Naive thymus-derived CD4-positive, alpha-beta T cell (primary cell): ENCODE measurements at regions of chr17 and their contacts with region 1.

Region 1: DNA sequence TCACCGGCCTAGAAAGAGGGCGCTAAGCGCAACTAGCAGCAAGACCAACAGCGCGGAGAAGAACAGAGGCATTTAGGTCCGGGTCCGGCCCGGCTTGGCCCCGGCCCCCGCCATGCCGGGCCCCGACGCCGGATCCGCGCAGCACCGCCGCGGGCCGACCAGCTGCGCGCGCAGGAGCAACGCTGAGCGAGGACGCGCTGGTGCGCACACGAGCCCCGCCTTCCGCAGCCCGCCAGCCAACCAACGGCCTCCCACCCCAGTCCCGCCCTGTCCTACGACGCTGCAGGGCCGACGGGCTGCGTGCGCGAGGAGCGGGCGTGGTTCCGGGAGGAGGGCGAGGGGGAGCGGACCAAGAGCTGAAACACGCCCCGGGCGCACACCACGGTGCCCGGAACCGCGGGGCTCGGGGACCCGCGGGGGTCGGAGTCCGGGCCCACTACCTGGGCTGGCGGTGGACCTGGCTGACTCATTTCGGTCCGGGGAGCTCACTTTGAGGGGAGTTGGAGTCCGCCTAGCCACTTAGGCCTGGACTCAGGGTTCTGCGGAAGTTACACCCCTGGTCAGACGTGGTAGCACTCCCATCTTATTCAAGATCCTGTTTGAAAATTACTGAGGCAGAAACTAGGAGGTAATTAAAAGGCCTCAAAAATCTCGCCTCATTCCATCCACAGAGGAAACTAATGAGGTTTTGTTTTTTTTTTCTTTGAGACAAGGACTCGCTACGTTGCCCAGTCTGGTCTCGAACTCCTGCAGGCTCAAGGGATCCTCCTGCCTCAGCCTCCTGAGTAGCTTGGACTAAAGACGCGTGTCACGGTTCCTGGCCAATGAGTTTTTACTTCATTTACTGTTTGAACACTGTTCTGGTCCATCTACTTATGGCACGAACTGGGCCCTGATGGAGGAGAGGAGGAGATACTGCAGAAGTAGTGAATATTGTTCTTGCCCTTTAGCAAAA is at the start of gene BLTP2:
- DNase-seq: peak; percentile 86 to 95 (median 93)
- ATAC-seq: peak; percentile 99
- H3K4me3 ChIP-seq: peak within 1 kb of the TSS; percentile 87
- H3K4me3 Mint-ChIP-seq: peak within 1 kb of the TSS; percentile 89 to 99 (median 94)
- H3K27ac ChIP-seq: peak within 1 kb of the TSS; percentile 95
- H3K27ac Mint-ChIP-seq: peak within 1 kb of the TSS; percentile 90 to 99 (median 97)
- H3K4me1 ChIP-seq: peaks cover 26 to 29% of the 10 kb centered on the region in 2 donors
- H3K4me1 Mint-ChIP-seq: peaks cover 29 to 57% (median 39%) of the 10 kb centered on the region in 7 donors
- H3K27me3 ChIP-seq: no peaks in the 10 kb centered on the region
- H3K27me3 Mint-ChIP-seq: no peaks in the 10 kb centered on the region
- total RNA-seq, gene BLTP2: 143 to 163 (median 153) TPM

Region 2: GRCh38 chr17:27892866-27893769 is 752.1 kb before region 1 on chr17 and contains the start of gene LYRM9:
- CTCF ChIA-PET with region 1: no interaction called
- POLR2A ChIA-PET with region 1: no interaction called
- intact Hi-C with region 1: loop called in 1 of 2 experiments (anchors 10 kb)
- DNase-seq: peak; percentile 87 to 99 (median 93)
- ATAC-seq: peak; percentile 100
- H3K4me3 ChIP-seq: peak within 1 kb of the TSS; percentile 80
- H3K4me3 Mint-ChIP-seq: peak within 1 kb of the TSS; percentile 76 to 95 (median 88)
- H3K27ac ChIP-seq: peak within 1 kb of the TSS; percentile 73
- H3K27ac Mint-ChIP-seq: peak within 1 kb of the TSS; percentile 69 to 89 (median 84)
- H3K4me1 ChIP-seq: peaks cover 0 to 13% of the 10 kb centered on the region in 2 donors
- H3K4me1 Mint-ChIP-seq: peaks cover 15 to 29% (median 26%) of the 10 kb centered on the region in 7 donors
- H3K27me3 ChIP-seq: no peaks in the 10 kb centered on the region
- H3K27me3 Mint-ChIP-seq: peaks cover 15 to 45% (median 19%) of the 10 kb centered on the region in 5 donors
- total RNA-seq, gene LYRM9: 4.2 to 24.5 (median 14.0) TPM

Region 3: DNA sequence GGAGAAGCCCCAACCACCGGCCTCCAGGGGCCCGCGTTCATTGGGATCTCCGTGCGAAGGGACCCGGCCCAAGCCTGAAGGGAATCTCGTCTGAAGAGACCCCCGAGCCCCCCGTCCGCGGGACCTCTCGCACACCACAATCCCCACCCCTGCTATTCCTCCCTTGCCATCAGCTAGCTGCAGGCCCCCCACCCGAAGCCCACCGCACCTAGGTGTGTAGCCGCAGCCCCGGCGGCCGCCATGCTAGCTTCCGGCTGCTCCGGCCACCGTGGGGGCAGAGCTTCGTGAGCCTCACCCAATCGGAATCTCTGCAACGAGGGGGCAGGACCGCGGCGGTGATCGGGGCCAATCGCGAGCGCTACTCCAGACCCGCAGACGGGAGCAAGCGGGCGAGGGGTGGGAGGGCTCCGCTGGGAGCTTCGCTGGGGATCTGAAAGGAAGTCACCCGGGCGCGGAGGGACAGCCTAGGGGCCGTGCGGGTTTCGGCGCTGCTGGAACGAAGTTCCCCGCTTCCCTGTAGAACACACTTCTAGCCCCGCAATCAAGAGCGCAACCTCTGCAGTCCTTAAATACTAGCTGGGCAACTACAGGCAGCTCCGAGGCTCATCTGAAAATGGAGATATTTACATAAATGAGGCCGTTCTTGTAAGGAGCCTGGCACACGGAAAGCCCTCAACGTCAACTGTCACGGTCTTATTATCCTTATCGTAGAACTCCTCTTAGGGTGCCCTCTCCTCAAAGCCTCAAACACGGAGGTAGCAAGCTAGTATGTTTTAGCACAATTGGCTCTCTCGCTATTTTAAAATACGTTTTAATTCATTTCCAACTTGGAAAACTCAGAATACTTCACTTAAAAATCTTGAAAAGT is 73.8 kb before region 1 on chr17 and contains the start of gene PIGS:
- CTCF ChIA-PET with region 1: no interaction called
- POLR2A ChIA-PET with region 1: interaction called, 14 read pairs
- intact Hi-C with region 1: loop called (anchors 1 to 5 kb)
- DNase-seq: peak; percentile 72 to 93 (median 84)
- ATAC-seq: peak; percentile 99
- H3K4me3 ChIP-seq: peak within 1 kb of the TSS; percentile 78
- H3K4me3 Mint-ChIP-seq: peak within 1 kb of the TSS; percentile 93 to 99 (median 96)
- H3K27ac ChIP-seq: peak within 1 kb of the TSS; percentile 90
- H3K27ac Mint-ChIP-seq: peak within 1 kb of the TSS; percentile 84 to 97 (median 93)
- H3K4me1 ChIP-seq: peaks cover 28 to 31% of the 10 kb centered on the region in 2 donors
- H3K4me1 Mint-ChIP-seq: peaks cover 49 to 76% (median 68%) of the 10 kb centered on the region in 7 donors
- H3K27me3 ChIP-seq: no peaks in the 10 kb centered on the region
- H3K27me3 Mint-ChIP-seq: no peaks in the 10 kb centered on the region
- total RNA-seq, gene PIGS: 58.5 to 71.2 (median 62.4) TPM

Region 4: DNA sequence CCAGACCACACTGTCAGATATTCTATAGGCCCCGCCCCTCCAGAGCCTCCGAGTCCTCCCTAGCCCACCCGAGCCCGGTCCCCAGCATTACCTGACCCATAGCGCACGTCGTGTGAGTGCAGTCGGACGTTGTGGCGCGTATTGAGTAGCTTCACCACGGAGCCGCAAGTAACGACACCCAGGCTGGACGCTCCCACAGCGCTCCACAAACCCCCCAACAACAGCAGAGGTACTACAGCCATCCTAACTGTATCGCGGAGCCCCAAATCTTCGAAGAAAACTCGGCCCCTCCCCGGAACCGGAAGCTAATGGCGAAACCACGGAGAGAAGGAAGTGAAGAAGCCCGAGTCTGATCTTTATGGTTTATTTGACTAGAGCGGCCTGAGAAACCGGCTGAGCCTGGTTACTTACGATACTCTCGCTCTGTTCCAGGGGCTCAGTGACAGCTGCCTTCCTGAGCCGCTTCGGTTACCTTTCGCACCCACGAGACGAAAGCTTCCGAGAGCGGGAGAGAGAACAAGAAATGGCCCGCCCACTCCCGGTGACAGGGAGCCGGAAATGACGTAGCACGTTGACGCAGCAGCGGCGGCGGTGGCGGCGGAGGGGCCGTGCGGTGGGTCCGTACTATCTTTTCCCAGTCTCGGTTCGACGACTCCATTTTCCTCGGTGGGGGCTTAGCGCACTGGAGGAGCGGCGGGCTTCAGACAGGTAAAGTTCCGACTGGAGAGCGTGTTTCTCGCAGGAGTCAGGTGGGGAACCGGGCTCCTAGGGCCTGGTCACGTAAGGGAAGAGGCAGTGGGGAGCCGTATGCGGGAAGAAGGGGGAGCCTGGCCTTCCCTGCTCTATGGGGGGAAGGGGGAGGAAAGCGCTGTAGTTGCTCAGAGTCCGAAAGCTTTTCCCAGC is 16.6 kb after region 1 on chr17 and contains the starts of genes SDF2 and SUPT6H:
- CTCF ChIA-PET with region 1: interaction called, 15 read pairs
- POLR2A ChIA-PET with region 1: interaction called, 81 read pairs
- intact Hi-C with region 1: loop called (anchors 1 kb)
- DNase-seq: peak; percentile 91 to 97 (median 95)
- ATAC-seq: peak; percentile 91
- H3K4me3 ChIP-seq: peak within 1 kb of the TSS; percentile 72
- H3K4me3 Mint-ChIP-seq: peak within 1 kb of the TSS; percentile 86 to 100 (median 99)
- H3K27ac ChIP-seq: peak within 1 kb of the TSS; percentile 90
- H3K27ac Mint-ChIP-seq: peak within 1 kb of the TSS; percentile 98 to 100 (median 100)
- H3K4me1 ChIP-seq: peaks cover 24 to 35% of the 10 kb centered on the region in 2 donors
- H3K4me1 Mint-ChIP-seq: peaks cover 45 to 73% (median 67%) of the 10 kb centered on the region in 7 donors
- H3K27me3 ChIP-seq: no peaks in the 10 kb centered on the region
- H3K27me3 Mint-ChIP-seq: no peaks in the 10 kb centered on the region
- total RNA-seq, gene SDF2: 28.6 to 49.5 (median 43.8) TPM
- total RNA-seq, gene SUPT6H: 91.2 to 132 (median 98.5) TPM

Region 5: DNA sequence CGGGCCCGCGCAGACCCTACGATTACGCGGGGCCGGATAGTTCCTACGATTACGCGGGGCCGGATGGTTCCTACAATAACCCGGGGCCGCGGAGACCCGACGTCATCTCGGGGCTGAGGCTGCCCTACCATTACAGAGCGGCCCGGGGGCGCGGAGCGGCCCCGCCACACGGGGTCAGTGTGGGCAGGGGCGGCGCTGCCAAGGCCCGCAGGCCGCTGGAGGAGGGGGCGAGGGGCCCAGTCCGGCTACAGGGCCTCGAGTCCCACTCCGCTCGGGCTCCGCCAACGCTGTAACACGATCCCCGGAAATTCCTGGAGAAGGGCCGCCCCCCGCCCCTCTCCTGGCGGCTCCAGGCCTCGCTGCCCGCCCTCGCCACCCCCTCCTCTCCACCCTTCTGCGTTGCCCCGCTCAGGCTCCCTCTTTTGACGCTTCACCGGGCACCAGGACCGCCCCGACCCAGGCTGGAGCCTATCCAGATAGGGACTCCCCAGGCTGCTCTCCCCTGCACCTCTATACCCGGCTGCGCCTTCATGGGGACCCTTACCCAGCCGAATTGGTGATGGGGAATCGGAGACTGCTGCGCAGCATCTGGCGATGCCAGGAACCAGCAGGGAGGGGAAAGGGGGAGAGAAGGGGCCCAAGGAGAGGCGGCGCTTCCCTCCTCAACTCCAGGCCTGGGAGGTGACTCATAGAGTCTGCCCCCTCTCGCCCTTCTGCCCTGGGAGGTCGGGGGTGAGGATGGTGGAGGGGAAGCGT is 72.5 kb after region 1 on chr17 and contains the start of gene RAB34:
- CTCF ChIA-PET with region 1: interaction called, 4 read pairs
- POLR2A ChIA-PET with region 1: interaction called, 33 read pairs
- intact Hi-C with region 1: loop called in 1 of 2 experiments (anchors 1 kb)
- DNase-seq: peak in 2 of 9 donors; percentile 18 to 21
- ATAC-seq: no peak
- H3K4me3 ChIP-seq: no peak within 1 kb of the TSS
- H3K4me3 Mint-ChIP-seq: peak within 1 kb of the TSS; percentile 58 to 99 (median 76)
- H3K27ac ChIP-seq: peak within 1 kb of the TSS; percentile 52
- H3K27ac Mint-ChIP-seq: peak within 1 kb of the TSS; percentile 59 to 97 (median 85)
- H3K4me1 ChIP-seq: peaks cover 26 to 30% of the 10 kb centered on the region in 2 donors
- H3K4me1 Mint-ChIP-seq: peaks cover 17 to 57% (median 35%) of the 10 kb centered on the region in 7 donors
- H3K27me3 ChIP-seq: no peaks in the 10 kb centered on the region
- H3K27me3 Mint-ChIP-seq: peaks cover 0 to 24% (median 6%) of the 10 kb centered on the region in 5 donors
- total RNA-seq, gene RAB34: 11.0 to 50.2 (median 16.4) TPM

Region 6: GRCh38 chr17:28792877-28793661 is 147.8 kb after region 1 on chr17:
- CTCF ChIA-PET with region 1: no interaction called
- POLR2A ChIA-PET with region 1: no interaction called
- intact Hi-C with region 1: no loop called
- DNase-seq: no peak
- ATAC-seq: no peak
- H3K4me3 ChIP-seq: no peak overlapping the region
- H3K4me3 Mint-ChIP-seq: no peak overlapping the region
- H3K27ac ChIP-seq: no peak overlapping the region
- H3K27ac Mint-ChIP-seq: peak overlapping the region in 3 of 9 donors; percentile 25 to 61 (median 55)
- H3K4me1 ChIP-seq: peaks cover 0 to 6% of the 10 kb centered on the region in 2 donors
- H3K4me1 Mint-ChIP-seq: peaks cover 19 to 44% (median 41%) of the 10 kb centered on the region in 7 donors
- H3K27me3 ChIP-seq: no peaks in the 10 kb centered on the region
- H3K27me3 Mint-ChIP-seq: no peaks in the 10 kb centered on the region

Region 7: DNA sequence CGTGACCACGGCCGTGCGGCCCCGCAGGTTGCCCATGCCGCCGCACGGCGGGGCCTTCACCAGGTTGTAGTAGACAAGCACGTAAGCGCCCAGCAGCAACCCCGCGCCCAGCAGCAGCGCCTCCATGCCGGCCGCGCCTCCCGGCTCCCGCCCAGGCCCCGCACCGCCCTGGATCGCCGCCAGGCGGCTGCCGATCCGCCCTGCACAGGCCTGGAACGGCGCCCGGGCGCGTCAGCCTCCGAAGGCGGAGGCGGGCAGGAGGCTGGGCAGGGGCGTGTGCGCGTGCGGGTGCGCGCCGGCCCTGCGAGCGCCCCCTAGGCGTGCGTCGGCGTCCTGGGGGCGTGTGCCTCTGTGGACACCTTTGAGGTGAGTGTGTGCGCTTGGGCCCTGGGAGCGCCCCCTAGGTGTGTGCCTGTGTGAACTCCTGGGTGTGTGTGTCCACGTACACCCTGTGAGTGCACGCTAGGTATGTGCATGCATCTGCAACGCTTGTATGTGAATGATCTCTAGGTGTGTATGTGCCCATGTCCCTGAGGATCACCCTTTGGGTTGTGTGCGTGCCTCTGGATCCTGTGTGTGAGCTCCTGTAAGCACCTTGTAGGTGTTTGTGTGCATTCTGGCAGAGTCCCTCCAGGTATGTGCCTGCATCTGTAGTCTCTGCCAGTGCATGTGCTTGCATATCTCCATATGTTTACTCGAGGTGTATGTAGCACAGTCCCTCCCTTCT is 257.7 kb after region 1 on chr17 and contains the start of gene DHRS13:
- CTCF ChIA-PET with region 1: no interaction called
- POLR2A ChIA-PET with region 1: no interaction called
- intact Hi-C with region 1: loop called (anchors 5 kb)
- DNase-seq: peak; percentile 92 to 99 (median 96)
- ATAC-seq: peak; percentile 96
- H3K4me3 ChIP-seq: peak within 1 kb of the TSS; percentile 77
- H3K4me3 Mint-ChIP-seq: peak within 1 kb of the TSS; percentile 85 to 98 (median 94)
- H3K27ac ChIP-seq: peak within 1 kb of the TSS; percentile 87
- H3K27ac Mint-ChIP-seq: peak within 1 kb of the TSS; percentile 81 to 96 (median 90)
- H3K4me1 ChIP-seq: peaks cover 18 to 29% of the 10 kb centered on the region in 2 donors
- H3K4me1 Mint-ChIP-seq: peaks cover 13 to 53% (median 36%) of the 10 kb centered on the region in 7 donors
- H3K27me3 ChIP-seq: no peaks in the 10 kb centered on the region
- H3K27me3 Mint-ChIP-seq: no peaks in the 10 kb centered on the region
- total RNA-seq, gene DHRS13: 20.0 to 51.3 (median 30.4) TPM